Ovary (tissue), 10 donors: ENCODE measurements at regions of chr12 and their contacts with region 1.

Region 1: DNA sequence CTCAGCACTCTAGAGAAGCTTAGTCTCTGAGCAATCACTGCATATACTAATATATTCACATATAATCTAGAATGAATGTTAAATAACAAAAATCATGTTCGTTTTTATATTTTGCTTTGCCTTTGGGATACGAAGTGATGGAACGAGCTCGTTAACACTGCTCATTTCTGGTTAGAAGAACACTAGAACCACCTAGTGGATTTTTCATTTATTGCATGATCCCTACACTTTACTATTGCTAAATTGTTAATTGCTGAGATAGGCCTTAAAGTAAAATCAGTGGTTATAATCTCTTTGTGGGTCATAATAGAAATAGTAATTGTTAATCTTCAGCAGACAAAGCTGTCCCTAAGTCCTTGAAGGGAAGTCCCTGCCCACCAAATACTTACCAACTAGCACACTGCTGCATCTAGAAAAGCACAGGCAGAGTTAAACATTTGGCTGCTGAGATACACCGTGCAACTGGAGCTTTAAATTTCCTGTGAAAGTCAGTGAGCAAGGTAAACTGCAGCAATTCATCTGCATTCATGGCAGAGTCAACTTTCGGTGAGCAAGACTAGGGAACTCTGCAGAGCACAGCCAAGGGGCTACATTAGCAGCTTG is 353.7 kb downstream of the APAF1 start:
- DNase-seq: no peak
- H3K4me3 ChIP-seq: no peak overlapping the region
- H3K27ac ChIP-seq: no peak overlapping the region
- H3K4me1 ChIP-seq: no peaks in the 10 kb centered on the region
- H3K27me3 ChIP-seq: no peaks in the 10 kb centered on the region
- CTCF ChIP-seq: peak; percentile 59 to 65 (median 62)
- EP300 ChIP-seq: no peak
- POLR2A ChIP-seq: no peak

Region 2: DNA sequence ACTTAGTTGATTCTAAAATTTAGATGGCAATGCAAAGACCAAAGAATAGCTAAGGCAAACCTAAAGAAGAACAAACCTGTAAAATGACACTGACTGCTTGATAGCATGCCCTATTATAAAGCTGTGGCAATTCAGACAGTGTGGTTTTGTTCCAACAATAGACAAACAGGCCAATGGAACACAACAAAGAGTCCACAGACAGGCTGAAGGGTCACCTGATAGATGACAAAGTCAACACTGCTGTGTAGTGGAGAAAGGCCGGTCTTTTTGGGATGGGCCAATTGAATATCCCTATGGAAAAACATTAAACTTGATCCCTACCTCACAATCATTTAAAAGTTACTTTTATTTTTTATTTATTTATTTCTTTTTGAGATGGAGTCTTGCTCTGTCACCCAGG is 439.1 kb before region 1 on chr12:
- intact Hi-C with region 1: loop called in 1 of 4 experiments (anchors 10 kb)
- DNase-seq: no peak
- H3K4me3 ChIP-seq: no peak overlapping the region
- H3K27ac ChIP-seq: no peak overlapping the region
- H3K4me1 ChIP-seq: no peaks in the 10 kb centered on the region
- H3K27me3 ChIP-seq: no peaks in the 10 kb centered on the region
- CTCF ChIP-seq: no peak
- EP300 ChIP-seq: no peak
- POLR2A ChIP-seq: no peak

Region 3: DNA sequence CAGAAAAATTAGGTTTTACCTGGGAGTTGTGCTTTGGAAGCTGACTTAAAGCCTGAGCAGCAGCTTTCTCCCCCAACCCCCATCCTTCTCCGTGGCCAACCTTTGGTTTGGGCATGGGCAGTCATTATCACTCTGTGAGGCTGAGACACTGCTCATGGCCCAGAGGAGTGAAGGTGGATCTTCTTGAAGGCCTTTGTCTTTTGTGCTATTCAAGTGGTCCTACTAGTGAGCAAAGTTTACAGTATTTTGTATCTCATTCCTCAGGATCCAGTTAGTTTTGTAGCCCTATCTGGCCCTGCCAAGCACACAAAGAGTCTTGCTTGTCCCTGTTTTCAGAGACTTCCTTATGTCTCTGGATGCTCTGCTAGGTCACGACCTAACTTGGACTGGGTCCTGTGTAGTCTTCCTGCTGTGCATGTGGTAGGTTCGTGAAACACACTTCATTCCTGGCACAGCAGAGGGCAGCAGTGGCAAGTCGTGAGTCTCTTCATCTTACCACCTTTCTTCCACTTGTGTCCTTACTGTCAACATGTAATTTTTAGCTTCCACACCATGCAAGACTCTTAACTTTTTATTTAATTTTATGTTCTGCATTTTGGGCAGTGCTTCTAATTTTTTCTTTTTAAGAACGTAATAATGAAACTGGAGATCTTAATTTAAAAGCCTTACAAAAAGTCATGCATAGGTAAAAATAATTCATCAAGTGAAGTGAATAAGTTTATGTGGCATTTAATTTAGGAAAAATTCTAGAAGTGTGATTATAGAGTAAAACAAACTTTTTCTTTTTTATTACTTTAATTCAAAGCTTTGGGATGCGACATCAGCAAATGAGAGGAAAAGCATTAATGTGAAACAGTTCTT is 300.0 kb before region 1 on chr12:
- intact Hi-C with region 1: loop called in 1 of 4 experiments (anchors 10 kb)
- DNase-seq: peak; percentile 51 to 66 (median 55)
- H3K4me3 ChIP-seq: no peak overlapping the region
- H3K27ac ChIP-seq: no peak overlapping the region
- H3K4me1 ChIP-seq: peaks cover 4% of the 10 kb centered on the region
- H3K27me3 ChIP-seq: no peaks in the 10 kb centered on the region
- CTCF ChIP-seq: peak in 2 of 3 donors; percentile 24 to 32
- EP300 ChIP-seq: no peak
- POLR2A ChIP-seq: no peak

Region 4: DNA sequence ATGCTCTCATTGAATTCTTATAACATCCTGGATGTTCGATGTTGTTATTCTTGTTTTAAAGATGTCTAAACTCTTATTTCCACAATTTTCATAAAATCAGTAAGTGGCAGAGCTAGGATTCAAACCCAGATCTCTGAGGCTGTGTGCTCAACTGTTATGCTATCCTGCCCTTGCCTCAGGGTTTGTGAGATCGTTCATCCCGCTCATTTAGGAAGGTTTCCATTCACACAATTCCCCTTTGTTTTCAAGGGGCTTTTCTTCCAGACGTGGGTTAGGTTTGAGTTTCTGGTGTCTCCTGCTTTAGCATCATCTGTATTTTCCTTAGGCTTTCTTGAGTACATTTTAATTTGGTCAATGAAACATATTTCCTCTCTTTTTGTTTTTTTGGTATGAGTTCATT is 284.4 kb before region 1 on chr12:
- intact Hi-C with region 1: no loop called
- DNase-seq: no peak
- H3K4me3 ChIP-seq: no peak overlapping the region
- H3K27ac ChIP-seq: no peak overlapping the region
- H3K4me1 ChIP-seq: no peaks in the 10 kb centered on the region
- H3K27me3 ChIP-seq: no peaks in the 10 kb centered on the region
- CTCF ChIP-seq: no peak
- EP300 ChIP-seq: no peak
- POLR2A ChIP-seq: no peak

Region 5: GRCh38 chr12:98725476-98726247 is 273.1 kb before region 1 on chr12:
- intact Hi-C with region 1: loop called in 1 of 4 experiments (anchors 10 kb)
- DNase-seq: peak; percentile 28 to 71 (median 51)
- H3K4me3 ChIP-seq: no peak overlapping the region
- H3K27ac ChIP-seq: no peak overlapping the region
- H3K4me1 ChIP-seq: no peaks in the 10 kb centered on the region
- H3K27me3 ChIP-seq: no peaks in the 10 kb centered on the region
- CTCF ChIP-seq: no peak
- EP300 ChIP-seq: no peak
- POLR2A ChIP-seq: no peak